ENCODE measurements at regions of chr9 and their contacts with region 1.

Region 1: DNA sequence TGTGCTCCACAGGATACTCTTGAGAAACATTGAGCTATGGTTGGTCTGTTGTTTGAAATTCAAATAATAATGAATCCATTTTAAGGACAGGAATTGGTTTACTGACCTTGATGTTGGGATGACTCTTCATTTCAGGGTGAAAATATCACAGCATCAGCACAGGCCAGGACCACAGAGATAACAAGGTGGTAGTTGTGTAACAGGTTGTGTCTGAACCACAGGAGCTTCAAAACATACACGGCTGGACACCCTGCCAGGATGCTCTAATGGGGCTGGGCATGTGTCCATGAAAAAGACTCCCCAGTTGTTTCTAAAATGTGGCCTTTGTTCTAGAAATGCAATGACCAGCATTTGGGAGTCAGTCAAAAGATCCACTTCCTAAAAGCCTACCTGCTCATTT is 69.8 kb downstream of the ACO1 start:
- DNase-seq: no peak
- H3K4me3 ChIP-seq: no peak overlapping the region
- H3K27ac ChIP-seq: no peak overlapping the region
- H3K4me1 ChIP-seq: no peaks in the 10 kb centered on the region
- H3K27me3 ChIP-seq: no peaks in the 10 kb centered on the region
- CTCF ChIP-seq: no peak
- POLR2A ChIP-seq: no peak

Region 2: DNA sequence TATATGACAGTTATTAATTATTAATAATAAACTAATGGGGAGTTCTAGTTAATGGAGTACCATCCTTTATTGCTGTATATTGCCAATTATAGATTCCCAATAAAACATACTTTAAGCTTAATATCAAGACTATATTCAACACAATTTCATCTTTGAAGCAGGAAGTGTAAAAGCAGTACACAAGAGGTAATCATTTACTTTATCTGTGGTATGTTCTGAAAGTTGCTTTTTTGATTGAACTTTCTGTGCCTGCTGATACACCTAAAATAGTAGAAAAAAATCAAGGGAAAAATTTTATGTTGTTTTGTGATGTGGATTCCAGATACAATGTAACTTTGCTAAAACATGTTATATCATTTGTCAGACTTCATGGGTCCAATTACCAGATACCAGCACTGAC is 11.8 kb before region 1 on chr9:
- intact Hi-C with region 1: no loop called
- DNase-seq: no peak
- H3K4me3 ChIP-seq: no peak overlapping the region
- H3K27ac ChIP-seq: no peak overlapping the region
- H3K4me1 ChIP-seq: no peaks in the 10 kb centered on the region
- H3K27me3 ChIP-seq: no peaks in the 10 kb centered on the region
- CTCF ChIP-seq: no peak
- POLR2A ChIP-seq: no peak

Region 3: GRCh38 chr9:32716946-32717543 is 262.8 kb after region 1 on chr9:
- intact Hi-C with region 1: no loop called
- DNase-seq: no peak
- H3K4me3 ChIP-seq: no peak overlapping the region
- H3K27ac ChIP-seq: no peak overlapping the region
- H3K4me1 ChIP-seq: no peaks in the 10 kb centered on the region
- H3K27me3 ChIP-seq: peaks cover 0 to 1% of the 10 kb centered on the region in 2 donors
- CTCF ChIP-seq: no peak
- POLR2A ChIP-seq: no peak

Region 4: DNA sequence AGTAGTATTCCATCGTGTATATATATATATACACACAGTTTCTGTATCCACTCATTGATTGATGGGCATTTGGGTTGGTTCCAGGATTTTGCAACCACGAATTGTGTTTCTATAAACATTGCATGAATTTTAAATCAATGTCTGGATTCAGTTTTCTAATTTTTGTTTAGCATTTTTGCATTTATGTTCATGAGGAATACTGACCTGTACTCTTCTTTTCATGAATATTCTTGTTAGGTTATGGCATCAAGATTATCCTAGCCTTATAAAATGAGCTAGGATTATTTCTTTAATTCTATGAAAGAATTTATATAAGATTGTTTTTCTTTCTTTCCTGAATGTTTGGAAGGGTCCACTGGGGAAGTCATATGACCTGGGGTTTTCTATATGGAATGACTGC is 293.7 kb after region 1 on chr9:
- intact Hi-C with region 1: loop called (anchors 5 kb)
- DNase-seq: no peak
- H3K4me3 ChIP-seq: no peak overlapping the region
- H3K27ac ChIP-seq: no peak overlapping the region
- H3K4me1 ChIP-seq: no peaks in the 10 kb centered on the region
- H3K27me3 ChIP-seq: no peaks in the 10 kb centered on the region
- CTCF ChIP-seq: no peak
- POLR2A ChIP-seq: no peak

Region 5: GRCh38 chr9:33225319-33226149 is 771.3 kb after region 1 on chr9:
- intact Hi-C with region 1: no loop called
- DNase-seq: peak; percentile 37 to 61
- H3K4me3 ChIP-seq: no peak overlapping the region
- H3K27ac ChIP-seq: no peak overlapping the region
- H3K4me1 ChIP-seq: no peaks in the 10 kb centered on the region
- H3K27me3 ChIP-seq: no peaks in the 10 kb centered on the region
- CTCF ChIP-seq: peak; percentile 80 to 89 (median 86)
- POLR2A ChIP-seq: no peak